ENCODE measurements at regions of chr6 and their contacts with region 1.

Region 1: GRCh38 chr6:24855395-24856245 is 56.9 kb upstream of the ARMH2 start:
- DNase-seq: peak in 4 of 5 donors; percentile 44 to 58 (median 52)
- ATAC-seq: peak in 3 of 4 donors; percentile 58 to 81 (median 80)
- H3K4me3 ChIP-seq: no peak overlapping the region
- H3K27ac ChIP-seq: peak overlapping the region in 8 of 12 donors; percentile 0 to 57 (median 39)
- H3K4me1 ChIP-seq: peaks cover 0 to 44% (median 10%) of the 10 kb centered on the region in 12 donors
- H3K27me3 ChIP-seq: no peaks in the 10 kb centered on the region
- CTCF ChIP-seq: peak; percentile 75 to 96 (median 87)
- POLR2A ChIP-seq: no peak

Region 2: DNA sequence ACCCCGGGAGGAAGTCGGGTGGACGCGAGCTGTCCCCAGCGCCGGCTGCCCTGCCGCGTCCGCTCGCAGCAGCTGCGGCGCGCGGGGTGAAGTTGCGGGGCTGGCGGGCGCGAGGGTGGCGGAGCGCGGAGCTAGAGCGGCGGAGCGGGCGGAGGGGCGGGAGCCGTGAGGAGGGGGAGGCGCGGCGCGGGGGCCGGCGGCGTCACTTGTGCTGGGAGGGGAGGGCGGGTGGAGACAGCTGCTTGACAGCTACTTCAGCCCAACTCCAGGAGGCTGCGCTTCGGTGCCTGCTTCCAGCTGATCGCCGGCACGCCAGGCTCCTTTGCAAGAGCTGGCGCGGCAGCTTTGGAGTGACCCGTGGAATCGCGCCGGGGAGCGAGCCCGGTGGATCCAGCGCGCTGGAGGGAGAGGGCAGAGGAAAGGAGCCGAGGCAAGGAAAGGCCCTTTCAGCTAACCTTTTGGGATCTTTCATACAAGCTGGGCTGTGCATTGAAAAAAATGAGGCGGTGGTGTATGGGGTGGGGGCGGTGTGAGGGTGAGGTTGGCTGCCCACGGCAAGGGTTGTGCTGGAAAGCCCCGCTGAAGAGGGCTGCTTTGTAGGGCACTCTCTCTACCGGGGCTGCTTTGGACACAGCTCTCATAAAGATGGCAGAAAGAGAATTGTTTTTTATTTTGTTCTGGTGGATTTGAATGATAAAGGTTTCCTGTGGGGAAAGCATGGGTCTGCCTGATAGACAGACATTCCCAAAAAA is 55.5 kb after region 1 on chr6:
- intact Hi-C with region 1: loop called in 3 of 10 experiments (anchors 5 kb)
- DNase-seq: peak; percentile 65 to 77 (median 74)
- ATAC-seq: peak; percentile 40 to 83 (median 76)
- H3K4me3 ChIP-seq: peak overlapping the region; percentile 41 to 93 (median 68)
- H3K27ac ChIP-seq: peak overlapping the region in 11 of 12 donors; percentile 37 to 85 (median 68)
- H3K4me1 ChIP-seq: peaks cover 0 to 68% (median 23%) of the 10 kb centered on the region in 12 donors
- H3K27me3 ChIP-seq: no peaks in the 10 kb centered on the region
- CTCF ChIP-seq: no peak
- POLR2A ChIP-seq: no peak

Region 3: GRCh38 chr6:24933868-24934401 is 78.3 kb after region 1 on chr6:
- intact Hi-C with region 1: loop called in 1 of 10 experiments (anchors 10 kb)
- DNase-seq: no peak
- ATAC-seq: no peak
- H3K4me3 ChIP-seq: peak overlapping the region in 2 of 12 donors; percentile 22 to 58
- H3K27ac ChIP-seq: peak overlapping the region in 1 of 12 donors; percentile 83
- H3K4me1 ChIP-seq: peaks cover 5 to 57% (median 23%) of the 10 kb centered on the region in 12 donors
- H3K27me3 ChIP-seq: no peaks in the 10 kb centered on the region
- CTCF ChIP-seq: peak in 8 of 12 donors; percentile 6 to 61 (median 38)
- POLR2A ChIP-seq: no peak

Region 4: DNA sequence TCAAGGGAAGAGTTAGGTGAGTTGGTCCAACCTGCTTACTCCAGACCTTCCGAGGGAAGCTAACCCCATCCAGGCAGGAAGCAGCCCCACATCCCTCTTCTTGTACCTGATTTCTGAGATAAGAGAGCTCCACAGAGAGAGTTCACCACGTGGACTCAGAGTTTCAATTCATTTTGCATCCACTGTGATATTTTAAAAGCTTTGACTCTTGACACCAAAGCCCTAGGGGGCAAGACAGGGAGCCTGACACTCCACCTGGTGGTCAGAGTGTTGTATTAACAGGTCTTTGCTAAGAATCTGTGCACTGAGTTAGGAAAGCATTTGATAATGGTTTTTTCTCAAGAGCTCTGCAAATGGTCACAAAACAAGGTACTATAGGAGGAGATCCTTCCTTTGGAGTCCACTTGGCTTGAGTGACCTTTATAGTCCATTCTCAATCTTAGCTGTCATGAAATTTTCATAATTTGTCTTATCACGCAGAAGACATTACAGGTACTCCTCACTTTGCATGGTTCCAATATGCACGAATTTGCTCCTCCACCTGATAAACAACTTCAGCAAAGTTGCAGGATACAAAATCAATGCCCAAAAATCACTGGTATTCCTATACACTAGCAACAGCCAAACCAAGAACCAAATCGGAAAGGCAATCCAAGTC is 136.3 kb after region 1 on chr6:
- intact Hi-C with region 1: loop called (anchors 1 to 5 kb)
- DNase-seq: peak in 4 of 5 donors; percentile 39 to 48 (median 44)
- ATAC-seq: peak in 3 of 4 donors; percentile 79 to 83 (median 83)
- H3K4me3 ChIP-seq: no peak overlapping the region
- H3K27ac ChIP-seq: peak overlapping the region in 1 of 12 donors; percentile 43
- H3K4me1 ChIP-seq: peaks cover 0 to 22% (median 0%) of the 10 kb centered on the region in 12 donors
- H3K27me3 ChIP-seq: no peaks in the 10 kb centered on the region
- CTCF ChIP-seq: peak; percentile 59 to 85 (median 74)
- POLR2A ChIP-seq: no peak

Region 5: DNA sequence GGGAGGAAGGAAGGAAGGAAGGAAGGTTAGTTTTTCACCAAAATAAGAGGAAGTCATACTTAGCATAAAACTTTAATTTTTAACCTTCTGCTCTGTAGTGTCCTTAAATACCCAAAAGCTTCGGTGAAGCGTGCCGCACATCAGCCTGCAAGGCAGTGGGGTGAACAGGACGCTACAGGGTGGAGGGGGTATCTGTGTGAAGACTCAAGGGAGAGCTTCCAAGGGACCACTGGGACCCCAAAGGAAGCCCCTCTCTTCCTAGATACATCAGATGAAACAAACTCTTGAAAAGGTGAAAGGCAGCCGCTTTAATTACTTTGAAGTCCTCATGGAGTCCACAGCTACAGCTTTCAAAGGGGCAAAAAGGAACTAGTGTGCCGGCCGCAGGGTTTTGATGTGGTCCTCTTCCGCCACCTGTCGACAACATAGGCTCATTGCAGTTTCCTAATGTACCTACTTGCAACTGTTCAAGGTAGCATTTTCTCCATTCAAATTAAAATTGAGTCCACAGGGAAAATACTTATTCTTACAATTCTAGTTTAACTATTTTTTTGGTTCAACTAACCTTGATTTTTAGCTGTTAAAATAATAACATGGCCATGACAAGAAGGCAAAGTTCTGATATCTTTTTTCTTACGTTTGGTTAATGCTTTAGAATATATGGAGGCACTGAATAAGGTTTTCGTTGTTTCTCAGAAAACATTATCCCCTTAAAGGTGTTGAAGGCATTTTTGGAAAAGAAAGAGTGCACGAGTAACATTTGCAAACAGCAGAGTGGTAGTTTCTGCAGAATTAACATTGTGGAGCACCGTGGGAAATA is 215.1 kb after region 1 on chr6:
- intact Hi-C with region 1: loop called (anchors 1 to 5 kb)
- DNase-seq: peak; percentile 73 to 78 (median 76)
- ATAC-seq: peak in 3 of 4 donors; percentile 87 to 88 (median 87)
- H3K4me3 ChIP-seq: peak overlapping the region in 1 of 12 donors; percentile 20
- H3K27ac ChIP-seq: peak overlapping the region in 3 of 12 donors; percentile 31 to 58 (median 42)
- H3K4me1 ChIP-seq: peaks cover 0 to 6% (median 0%) of the 10 kb centered on the region in 12 donors
- H3K27me3 ChIP-seq: no peaks in the 10 kb centered on the region
- CTCF ChIP-seq: peak; percentile 87 to 96 (median 94)
- POLR2A ChIP-seq: no peak

Region 6: GRCh38 chr6:25205629-25206028 is 350.0 kb after region 1 on chr6:
- intact Hi-C with region 1: no loop called
- DNase-seq: no peak
- ATAC-seq: no peak
- H3K4me3 ChIP-seq: no peak overlapping the region
- H3K27ac ChIP-seq: no peak overlapping the region
- H3K4me1 ChIP-seq: peaks cover 0 to 3% (median 0%) of the 10 kb centered on the region in 12 donors
- H3K27me3 ChIP-seq: no peaks in the 10 kb centered on the region
- CTCF ChIP-seq: no peak
- POLR2A ChIP-seq: no peak

Region 7: GRCh38 chr6:25490018-25490801 is 634.6 kb after region 1 on chr6:
- intact Hi-C with region 1: no loop called
- DNase-seq: peak; percentile 61 to 74 (median 72)
- ATAC-seq: peak; percentile 57 to 90 (median 86)
- H3K4me3 ChIP-seq: no peak overlapping the region
- H3K27ac ChIP-seq: peak overlapping the region in 4 of 12 donors; percentile 6 to 37 (median 26)
- H3K4me1 ChIP-seq: peaks cover 0 to 28% (median 15%) of the 10 kb centered on the region in 12 donors
- H3K27me3 ChIP-seq: no peaks in the 10 kb centered on the region
- CTCF ChIP-seq: peak; percentile 59 to 87 (median 78)
- POLR2A ChIP-seq: no peak